ENCODE measurements at regions of chr11 and their contacts with region 1.

Region 1: DNA sequence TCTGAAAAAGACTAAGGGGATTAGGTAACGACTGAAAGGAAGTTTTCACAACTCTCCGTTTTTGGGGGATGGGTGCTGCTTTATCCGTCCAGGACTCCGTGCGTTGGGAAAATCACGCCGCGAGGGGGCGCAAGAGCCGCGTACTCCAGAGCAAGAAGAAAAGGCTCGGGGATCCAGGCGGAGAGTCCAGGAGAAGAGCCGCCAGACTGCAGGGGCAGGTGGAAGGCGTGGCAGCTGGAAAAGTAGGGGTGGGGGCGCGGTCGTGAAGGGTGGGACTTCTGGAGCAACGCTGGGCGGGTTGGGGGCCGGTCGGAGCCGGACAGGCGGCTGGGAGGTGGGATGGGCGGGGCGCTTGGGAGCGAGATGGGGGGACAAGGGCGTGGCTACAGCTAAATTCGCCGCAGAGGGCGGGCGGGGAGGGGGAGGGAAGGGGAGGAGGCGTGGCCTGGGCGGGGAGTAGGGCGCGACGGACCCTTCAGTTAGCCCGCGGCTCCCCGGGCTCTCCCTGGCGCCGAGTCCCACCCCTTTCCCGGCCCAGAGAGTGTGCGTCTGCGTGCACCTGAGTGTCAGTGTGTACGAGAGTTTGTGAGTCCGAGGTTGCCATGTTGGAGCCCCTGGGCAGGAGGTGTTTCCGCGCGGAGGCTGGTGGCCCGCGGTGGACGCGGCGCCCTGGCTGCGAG is 613 bp upstream of the ARHGEF17 start:
- DNase-seq: peak; percentile 99
- H3K4me3 ChIP-seq: peak overlapping the region; percentile 60
- H3K27ac ChIP-seq: peak overlapping the region; percentile 87
- H3K4me1 ChIP-seq: peaks cover 4% of the 10 kb centered on the region
- H3K27me3 ChIP-seq: no peaks in the 10 kb centered on the region
- CTCF ChIP-seq: peak; percentile 61

Region 2: DNA sequence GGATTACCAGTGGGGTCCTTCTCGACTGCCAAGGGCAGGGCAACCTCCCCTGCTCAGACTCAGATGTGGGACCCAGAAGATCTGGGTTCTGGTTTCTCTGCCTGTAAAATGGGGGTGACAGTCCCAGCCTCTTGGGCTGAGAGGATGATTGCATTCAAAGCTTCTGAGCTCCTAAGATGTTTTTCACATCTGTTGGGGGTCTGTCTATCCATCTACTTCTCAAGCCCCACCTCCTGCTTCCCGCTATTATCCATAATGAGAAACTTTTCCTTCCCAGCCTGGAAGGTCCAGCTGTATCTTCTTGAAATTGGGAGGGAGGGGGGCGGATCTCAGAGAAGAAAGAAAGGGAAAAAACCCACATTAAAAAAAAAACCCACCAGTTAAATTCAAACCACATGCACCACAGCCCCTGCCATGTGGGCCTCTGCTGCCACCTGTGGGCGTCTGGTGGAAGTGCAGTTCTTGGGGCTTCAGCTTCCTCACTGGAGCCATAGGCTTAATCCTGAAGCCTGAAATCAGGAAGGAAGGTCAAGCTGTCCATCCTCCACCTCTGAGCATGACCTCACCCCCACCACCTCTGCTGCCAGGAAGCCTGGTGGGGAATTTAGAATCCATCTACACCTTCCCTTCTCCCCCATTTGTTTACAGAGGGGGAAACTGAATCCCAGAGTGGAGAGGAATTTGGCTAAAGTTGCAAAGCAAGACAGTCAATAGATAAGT is 27.9 kb after region 1 on chr11:
- intact Hi-C with region 1: loop called (anchors 2 kb)
- DNase-seq: peak; percentile 90
- H3K4me3 ChIP-seq: no peak overlapping the region
- H3K27ac ChIP-seq: peak overlapping the region; percentile 65
- H3K4me1 ChIP-seq: no peaks in the 10 kb centered on the region
- H3K27me3 ChIP-seq: no peaks in the 10 kb centered on the region
- CTCF ChIP-seq: peak; percentile 99

Measured in colonic mucosa (tissue), 4 donors.